ENCODE measurements at regions of chr10 and their contacts with region 1.

Region 1: DNA sequence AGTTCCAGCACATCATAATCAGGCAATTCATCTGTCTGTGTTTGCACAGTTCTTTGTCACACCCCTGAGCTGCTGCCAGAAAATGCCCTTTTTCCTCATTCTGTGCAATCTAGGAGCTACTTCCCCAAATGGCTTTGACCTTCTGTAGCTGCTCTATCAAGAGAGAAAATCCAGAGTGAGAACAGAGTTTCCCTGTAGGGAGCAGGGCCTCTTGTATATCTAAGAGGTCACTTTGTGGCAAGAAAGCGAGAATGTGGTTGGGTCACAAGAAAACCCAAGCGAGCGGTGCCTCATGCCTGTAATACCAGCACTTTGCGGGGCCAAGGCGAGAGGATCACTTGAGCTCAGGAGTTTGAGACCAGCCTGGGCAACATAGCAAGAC is 24.3 kb downstream of the SLC29A3 start:
- DNase-seq: peak; percentile 75 to 98
- H3K4me3 ChIP-seq: no peak overlapping the region
- H3K27ac ChIP-seq: peak overlapping the region; percentile 81
- H3K4me1 ChIP-seq: peaks cover 86% of the 10 kb centered on the region
- H3K27me3 ChIP-seq: no peaks in the 10 kb centered on the region
- CTCF ChIP-seq: no peak

Region 2: GRCh38 chr10:71325267-71325666 is 18.1 kb before region 1 on chr10:
- CTCF ChIA-PET with region 1: interaction called, 9 read pairs
- POLR2A ChIA-PET with region 1: interaction called, 10 read pairs
- intact Hi-C with region 1: no loop called
- DNase-seq: no peak
- H3K4me3 ChIP-seq: no peak overlapping the region
- H3K27ac ChIP-seq: no peak overlapping the region
- H3K4me1 ChIP-seq: peaks cover 11% of the 10 kb centered on the region
- H3K27me3 ChIP-seq: no peaks in the 10 kb centered on the region
- CTCF ChIP-seq: no peak

Region 3: DNA sequence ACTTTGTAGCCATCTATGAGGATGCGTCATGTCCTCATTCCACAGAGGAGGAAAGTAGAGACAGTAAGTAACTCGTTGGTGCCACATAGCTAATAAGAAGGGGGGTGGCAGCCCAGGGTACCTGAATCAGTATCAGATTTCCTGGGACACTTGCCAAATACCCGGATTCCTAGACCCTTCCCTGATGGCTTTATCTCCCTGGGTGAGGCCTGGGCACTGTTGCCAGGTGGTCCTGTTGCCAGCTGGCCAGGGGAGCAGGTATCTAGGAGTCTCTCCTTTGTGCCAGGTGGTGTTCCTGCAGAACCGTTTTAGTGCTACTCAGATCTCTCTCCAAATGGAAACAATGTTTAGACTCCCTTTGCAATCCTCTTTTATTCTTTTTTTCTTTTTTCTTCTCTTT is 11.6 kb before region 1 on chr10:
- CTCF ChIA-PET with region 1: interaction called, 3 read pairs
- POLR2A ChIA-PET with region 1: interaction called, 4 read pairs
- intact Hi-C with region 1: loop called (anchors 1 kb)
- DNase-seq: peak; percentile 45 to 79
- H3K4me3 ChIP-seq: no peak overlapping the region
- H3K27ac ChIP-seq: no peak overlapping the region
- H3K4me1 ChIP-seq: peaks cover 20% of the 10 kb centered on the region
- H3K27me3 ChIP-seq: no peaks in the 10 kb centered on the region
- CTCF ChIP-seq: no peak

Region 4: DNA sequence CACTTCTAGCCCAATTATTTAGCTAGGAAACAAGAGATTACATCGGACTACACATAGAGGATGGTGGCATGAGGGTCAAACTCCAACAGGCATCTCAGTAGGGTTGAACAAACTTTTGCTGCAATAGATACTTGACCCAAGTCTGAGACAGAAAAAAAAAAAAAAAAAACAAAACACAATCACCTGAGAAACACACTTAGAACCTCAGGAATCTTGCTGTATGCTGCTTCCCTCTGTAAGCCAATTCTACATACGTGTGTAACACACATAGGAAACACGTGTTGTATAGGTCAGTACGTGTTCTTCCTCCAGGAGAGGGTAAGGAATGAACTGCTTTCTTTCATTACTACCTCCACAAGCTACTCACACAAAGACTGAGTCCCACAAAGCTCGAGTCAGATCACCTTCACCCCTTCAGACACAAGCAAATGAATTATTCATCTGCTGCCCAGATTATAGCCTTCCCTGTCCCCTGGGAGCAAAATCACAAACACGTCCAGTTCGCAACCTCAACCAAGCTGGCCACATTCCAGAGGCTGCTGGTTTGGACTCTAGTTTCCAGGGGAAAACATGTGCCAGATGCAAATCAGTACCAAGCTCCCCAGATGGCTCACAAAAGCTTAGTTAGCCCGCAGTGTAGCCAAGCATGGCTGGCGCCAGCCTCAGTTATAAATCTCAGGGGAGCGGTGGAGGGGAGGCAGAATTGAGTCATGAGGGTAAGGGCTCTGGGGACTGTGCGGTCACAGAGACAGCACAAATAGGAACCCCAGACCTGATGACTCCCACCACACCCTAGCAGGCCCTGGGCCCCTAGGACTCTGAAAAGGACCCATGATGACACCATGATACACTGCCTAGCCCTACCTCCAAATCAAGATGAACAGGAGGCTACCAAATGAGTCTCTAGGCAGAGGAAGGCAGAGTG is 492.6 kb after region 1 on chr10:
- CTCF ChIA-PET with region 1: no interaction called
- POLR2A ChIA-PET with region 1: interaction called, 16 read pairs
- intact Hi-C with region 1: no loop called
- DNase-seq: peak in 1 of 2 experiments; percentile 28
- H3K4me3 ChIP-seq: no peak overlapping the region
- H3K27ac ChIP-seq: no peak overlapping the region
- H3K4me1 ChIP-seq: peaks cover 52% of the 10 kb centered on the region
- H3K27me3 ChIP-seq: no peaks in the 10 kb centered on the region
- CTCF ChIP-seq: no peak

Region 5: DNA sequence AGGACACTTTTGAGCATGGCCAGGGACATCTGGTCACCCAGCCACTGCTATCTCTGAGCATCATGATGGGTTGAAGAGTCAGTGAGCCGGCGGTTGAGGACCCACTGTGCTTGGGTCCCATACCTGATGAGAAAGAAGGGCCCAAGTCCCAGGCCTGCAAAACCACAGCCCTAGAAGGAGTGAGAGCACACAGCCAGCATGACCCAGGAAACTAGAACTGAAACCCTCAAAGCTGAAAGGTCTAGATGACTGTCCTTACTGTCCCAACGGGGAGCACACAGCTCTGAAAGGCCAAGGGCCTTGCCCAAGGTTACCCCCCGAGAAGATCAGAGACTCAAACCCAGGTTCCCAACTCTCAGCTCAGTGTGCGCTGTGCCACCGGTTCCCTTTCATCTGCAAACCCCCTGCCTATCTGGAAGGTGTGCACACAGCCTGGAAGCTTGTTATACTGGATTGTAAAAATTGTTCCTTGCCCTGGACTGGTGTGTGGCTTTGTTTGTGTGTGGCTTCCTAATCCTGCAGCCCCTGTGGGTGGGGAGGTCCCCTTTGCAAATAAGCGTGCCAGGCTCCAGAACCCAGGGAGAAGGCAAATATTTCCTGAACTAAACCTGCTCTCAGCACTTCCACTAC is 530.3 kb after region 1 on chr10:
- CTCF ChIA-PET with region 1: no interaction called
- POLR2A ChIA-PET with region 1: no interaction called
- intact Hi-C with region 1: loop called (anchors 5 kb)
- DNase-seq: no peak
- H3K4me3 ChIP-seq: no peak overlapping the region
- H3K27ac ChIP-seq: no peak overlapping the region
- H3K4me1 ChIP-seq: peaks cover 19% of the 10 kb centered on the region
- H3K27me3 ChIP-seq: no peaks in the 10 kb centered on the region
- CTCF ChIP-seq: no peak

Measured in PC-9 (cell line).